ENCODE measurements at regions of chr21 and their contacts with region 1.

Region 1: DNA sequence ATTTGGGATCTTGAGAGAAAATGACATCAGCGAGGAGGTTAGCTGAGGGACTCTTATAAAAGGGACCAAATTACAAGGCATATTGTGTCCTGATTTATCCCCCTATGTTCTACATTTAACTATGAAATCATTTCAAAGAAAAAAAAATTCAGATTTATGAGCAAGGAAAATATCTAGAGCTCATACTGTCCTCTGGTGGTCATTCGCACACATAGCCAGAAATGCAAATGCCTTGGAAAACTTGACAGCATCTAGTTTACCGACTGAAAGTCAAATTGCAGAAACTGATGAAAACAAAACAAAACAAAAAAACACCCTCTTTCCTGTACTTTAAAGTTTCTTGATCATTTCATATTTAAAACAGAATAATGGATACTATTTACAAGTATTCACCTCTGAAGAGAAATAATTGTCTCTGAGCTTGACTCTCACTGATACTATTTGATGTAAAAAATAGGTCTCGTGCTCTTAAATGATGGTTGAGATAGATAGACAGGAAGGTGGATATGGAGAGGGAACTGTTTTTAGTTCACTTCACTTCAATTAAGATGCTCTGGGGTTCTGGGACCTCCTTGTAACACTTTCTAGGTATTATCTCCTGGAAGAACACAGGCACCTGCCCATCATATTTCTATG is 253.8 kb downstream of the PCP4 start:
- DNase-seq: no peak
- ATAC-seq: no peak
- H3K4me3 ChIP-seq: no peak overlapping the region
- H3K27ac ChIP-seq: no peak overlapping the region
- H3K4me1 ChIP-seq: no peaks in the 10 kb centered on the region
- H3K27me3 ChIP-seq: no peaks in the 10 kb centered on the region
- CTCF ChIP-seq: peak; percentile 20 to 62 (median 51); a peak in 5 of 6 replicates
- POLR2A ChIP-seq: no peak
- RAD21 ChIP-seq: peak; percentile 38; the same call in 1 of the 2 replicates

Region 2: GRCh38 chr21:39788383-39788782 is 332.7 kb before region 1 on chr21:
- CTCF ChIA-PET with region 1: interaction called, 3 read pairs
- POLR2A ChIA-PET with region 1: no interaction called
- RAD21 ChIA-PET with region 1: no interaction called
- intact Hi-C with region 1: loop called (anchors 1 kb)
- DNase-seq: peak; percentile 66
- ATAC-seq: peak; percentile 100
- H3K4me3 ChIP-seq: no peak overlapping the region; a peak in 1 of 4 replicates
- H3K27ac ChIP-seq: no peak overlapping the region
- H3K4me1 ChIP-seq: peaks cover 5 to 9% of the 10 kb centered on the region in 2 experiments; a peak in 2 of 4 replicates
- H3K27me3 ChIP-seq: no peaks in the 10 kb centered on the region
- CTCF ChIP-seq: peak; percentile 86 to 95 (median 93)
- POLR2A ChIP-seq: no peak
- RAD21 ChIP-seq: peak; percentile 76

Region 3: DNA sequence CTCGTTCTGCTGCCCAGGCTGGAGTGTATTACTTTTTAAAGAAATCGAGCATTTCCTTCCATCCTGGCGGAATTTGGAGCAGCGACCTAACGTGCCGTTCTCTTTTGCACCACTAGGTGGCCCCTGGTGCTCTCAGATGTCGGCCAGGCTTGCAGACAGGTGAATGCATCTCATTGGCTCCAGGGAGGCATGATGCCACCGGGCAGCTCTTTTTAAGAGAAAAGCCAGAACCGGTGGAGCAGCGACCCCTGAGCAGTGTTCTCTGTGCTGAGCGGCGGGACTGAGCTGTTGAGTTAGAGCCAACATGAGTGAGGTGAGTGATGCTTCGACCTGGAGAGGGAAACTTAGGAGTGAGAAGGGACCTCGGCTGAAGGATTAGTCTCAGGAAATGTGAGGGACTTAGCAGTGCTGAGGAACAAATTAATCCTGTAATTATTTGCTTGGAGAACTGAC is 253.8 kb before region 1 on chr21 and contains the start of gene PCP4:
- CTCF ChIA-PET with region 1: no interaction called
- POLR2A ChIA-PET with region 1: no interaction called
- RAD21 ChIA-PET with region 1: no interaction called
- intact Hi-C with region 1: loop called (anchors 2 kb)
- DNase-seq: peak; percentile 27
- ATAC-seq: peak; percentile 81
- H3K4me3 ChIP-seq: no peak within 1 kb of the TSS
- H3K27ac ChIP-seq: no peak within 1 kb of the TSS
- H3K4me1 ChIP-seq: no peaks in the 10 kb centered on the region
- H3K27me3 ChIP-seq: 0 out of 2 replicates have a peak, but pooled peaks cover 4% of the 10 kb centered on the region
- CTCF ChIP-seq: peak; percentile 22 to 86 (median 85); a peak in 5 of 6 replicates
- POLR2A ChIP-seq: no peak
- RAD21 ChIP-seq: peak; percentile 53
- total RNA-seq, gene PCP4: not detected

Region 4: DNA sequence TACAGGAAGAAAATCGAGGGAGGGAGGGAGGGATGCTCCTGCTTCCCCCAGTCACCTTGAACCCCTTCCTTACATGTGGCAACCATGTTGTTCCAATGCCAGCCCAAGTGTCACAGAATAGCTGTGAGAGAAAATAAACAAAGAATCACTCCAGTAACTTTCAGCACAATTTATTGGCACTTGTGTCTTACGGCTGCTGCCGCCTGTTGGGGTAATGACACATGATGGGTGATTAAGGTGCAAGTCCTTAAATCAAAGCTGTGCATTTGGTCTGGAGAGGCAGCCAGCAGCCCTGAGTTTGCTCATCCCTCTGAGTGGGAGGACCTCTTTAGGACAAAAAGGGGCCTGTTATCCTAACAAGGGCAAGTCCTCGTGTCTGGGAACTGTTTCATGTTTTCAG is 123.9 kb after region 1 on chr21:
- CTCF ChIA-PET with region 1: no interaction called
- POLR2A ChIA-PET with region 1: no interaction called
- RAD21 ChIA-PET with region 1: no interaction called
- intact Hi-C with region 1: no loop called
- DNase-seq: no peak
- ATAC-seq: no peak
- H3K4me3 ChIP-seq: no peak overlapping the region
- H3K27ac ChIP-seq: no peak overlapping the region
- H3K4me1 ChIP-seq: no peaks in the 10 kb centered on the region
- H3K27me3 ChIP-seq: no peaks in the 10 kb centered on the region
- CTCF ChIP-seq: no peak
- POLR2A ChIP-seq: no peak
- RAD21 ChIP-seq: no peak